OCI-LY7 (cell line): ENCODE measurements at regions of chr11 and their contacts with region 1.

Region 1: GRCh38 chr11:9681583-9682372 is 17.9 kb downstream of the SWAP70 start:
- DNase-seq: peak; percentile 59
- H3K4me3 ChIP-seq: peak overlapping the region; percentile 30
- H3K27ac ChIP-seq: peak overlapping the region; percentile 81
- H3K4me1 ChIP-seq: peaks cover 96% of the 10 kb centered on the region
- CTCF ChIP-seq: no peak

Region 2: GRCh38 chr11:9092853-9093778 is 588.7 kb before region 1 on chr11:
- CTCF ChIA-PET with region 1: no interaction called
- POLR2A ChIA-PET with region 1: no interaction called
- intact Hi-C with region 1: no loop called
- DNase-seq: peak; percentile 18
- H3K4me3 ChIP-seq: no peak overlapping the region
- H3K27ac ChIP-seq: no peak overlapping the region
- H3K4me1 ChIP-seq: no peaks in the 10 kb centered on the region
- CTCF ChIP-seq: peak; percentile 70

Region 3: DNA sequence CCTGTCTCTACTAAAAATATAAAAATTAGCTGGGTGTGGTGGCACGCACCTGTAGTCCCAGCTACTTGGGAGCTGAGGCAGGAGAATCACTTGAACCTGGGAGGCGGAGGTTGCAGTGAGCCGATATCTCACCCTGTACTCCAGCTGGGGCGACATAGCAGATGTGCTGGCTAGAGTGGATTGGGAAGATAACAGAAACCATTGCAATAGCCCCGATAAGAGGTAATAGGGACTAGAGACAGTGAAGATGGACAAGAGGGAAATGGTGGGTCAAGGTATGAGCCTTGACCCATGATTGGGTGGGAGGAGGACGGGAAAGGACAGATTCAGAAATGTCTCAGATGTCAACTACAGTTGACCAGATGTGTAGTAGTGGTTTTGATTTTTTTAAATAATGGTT is 11.8 kb before region 1 on chr11:
- CTCF ChIA-PET with region 1: interaction called, 4 read pairs
- POLR2A ChIA-PET with region 1: interaction called, 175 read pairs
- intact Hi-C with region 1: no loop called
- DNase-seq: no peak
- H3K4me3 ChIP-seq: peak overlapping the region; percentile 82
- H3K27ac ChIP-seq: peak overlapping the region; percentile 64
- H3K4me1 ChIP-seq: peaks cover 60% of the 10 kb centered on the region
- CTCF ChIP-seq: no peak